CD8-positive, alpha-beta T cell (primary cell): ENCODE measurements at regions of chr11 and their contacts with region 1.

Region 1: DNA sequence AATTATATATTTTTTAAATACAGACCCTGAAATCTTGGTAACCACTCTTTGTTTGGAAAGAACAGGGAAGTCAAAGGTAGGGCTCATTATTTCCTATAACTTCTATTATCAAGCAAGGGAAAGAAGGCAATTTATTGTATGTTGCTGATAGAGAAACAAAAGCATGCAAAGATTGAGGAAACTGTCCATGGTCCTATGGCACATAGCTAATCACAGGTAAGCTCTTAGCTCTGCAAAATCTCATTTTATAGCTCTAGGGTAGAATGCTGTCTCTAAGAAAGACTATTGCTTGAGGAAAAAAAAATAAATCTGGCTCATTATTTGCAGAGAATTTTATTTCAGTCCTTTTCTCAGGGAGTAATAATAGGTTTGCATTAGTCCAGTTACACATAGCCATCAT is 7.4 kb upstream of the GUCY1A2 start:
- DNase-seq: no peak
- ATAC-seq: no peak
- H3K4me3 ChIP-seq: no peak overlapping the region
- H3K4me3 Mint-ChIP-seq: no peak overlapping the region
- H3K27ac ChIP-seq: no peak overlapping the region
- H3K27ac Mint-ChIP-seq: no peak overlapping the region
- H3K4me1 ChIP-seq: no peaks in the 10 kb centered on the region
- H3K4me1 Mint-ChIP-seq: no peaks in the 10 kb centered on the region
- H3K27me3 ChIP-seq: no peaks in the 10 kb centered on the region
- H3K27me3 Mint-ChIP-seq: peaks cover 12% of the 10 kb centered on the region
- CTCF ChIP-seq: no peak

Region 2: GRCh38 chr11:106888386-106888785 is 137.3 kb before region 1 on chr11:
- CTCF ChIA-PET with region 1: no interaction called
- POLR2A ChIA-PET with region 1: no interaction called
- intact Hi-C with region 1: no loop called
- DNase-seq: no peak
- ATAC-seq: no peak
- H3K4me3 ChIP-seq: no peak overlapping the region
- H3K4me3 Mint-ChIP-seq: no peak overlapping the region
- H3K27ac ChIP-seq: no peak overlapping the region
- H3K27ac Mint-ChIP-seq: no peak overlapping the region
- H3K4me1 ChIP-seq: no peaks in the 10 kb centered on the region
- H3K4me1 Mint-ChIP-seq: no peaks in the 10 kb centered on the region
- H3K27me3 ChIP-seq: no peaks in the 10 kb centered on the region
- H3K27me3 Mint-ChIP-seq: no peaks in the 10 kb centered on the region
- CTCF ChIP-seq: no peak

Region 3: GRCh38 chr11:106983941-106984340 is 41.7 kb before region 1 on chr11:
- CTCF ChIA-PET with region 1: no interaction called
- POLR2A ChIA-PET with region 1: interaction called, 3 read pairs
- intact Hi-C with region 1: loop called in 1 of 2 experiments (anchors 2 kb)
- DNase-seq: no peak
- ATAC-seq: no peak
- H3K4me3 ChIP-seq: no peak overlapping the region
- H3K4me3 Mint-ChIP-seq: no peak overlapping the region
- H3K27ac ChIP-seq: no peak overlapping the region
- H3K27ac Mint-ChIP-seq: no peak overlapping the region
- H3K4me1 ChIP-seq: no peaks in the 10 kb centered on the region
- H3K4me1 Mint-ChIP-seq: no peaks in the 10 kb centered on the region
- H3K27me3 ChIP-seq: no peaks in the 10 kb centered on the region
- H3K27me3 Mint-ChIP-seq: no peaks in the 10 kb centered on the region
- CTCF ChIP-seq: no peak

Region 4: DNA sequence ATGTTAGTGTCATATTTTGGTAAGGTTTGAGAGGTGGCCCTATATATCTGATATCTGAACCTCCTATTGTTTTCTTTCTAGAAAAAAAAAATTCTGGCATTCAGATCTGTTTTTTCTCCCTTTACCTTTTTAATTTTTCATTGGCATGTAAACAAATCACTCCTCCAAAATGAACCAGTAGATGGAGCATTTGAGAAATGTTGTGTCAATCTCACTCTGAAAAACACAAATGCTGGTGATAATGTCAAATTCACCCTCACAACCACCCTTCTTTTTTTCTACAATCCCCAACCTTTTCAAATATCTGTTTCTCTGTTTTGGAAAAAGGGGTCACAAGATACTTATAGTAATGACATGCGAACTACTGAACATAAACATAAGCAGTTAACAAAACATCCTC is 16.5 kb before region 1 on chr11:
- CTCF ChIA-PET with region 1: no interaction called
- POLR2A ChIA-PET with region 1: no interaction called
- intact Hi-C with region 1: no loop called
- DNase-seq: no peak
- ATAC-seq: no peak
- H3K4me3 ChIP-seq: no peak overlapping the region
- H3K4me3 Mint-ChIP-seq: no peak overlapping the region
- H3K27ac ChIP-seq: no peak overlapping the region
- H3K27ac Mint-ChIP-seq: no peak overlapping the region
- H3K4me1 ChIP-seq: no peaks in the 10 kb centered on the region
- H3K4me1 Mint-ChIP-seq: no peaks in the 10 kb centered on the region
- H3K27me3 ChIP-seq: no peaks in the 10 kb centered on the region
- H3K27me3 Mint-ChIP-seq: no peaks in the 10 kb centered on the region
- CTCF ChIP-seq: no peak

Region 5: GRCh38 chr11:107043242-107044006 is 17.8 kb after region 1 on chr11:
- CTCF ChIA-PET with region 1: no interaction called
- POLR2A ChIA-PET with region 1: no interaction called
- intact Hi-C with region 1: loop called in 1 of 2 experiments (anchors 1 kb)
- DNase-seq: no peak
- ATAC-seq: no peak
- H3K4me3 ChIP-seq: no peak overlapping the region
- H3K4me3 Mint-ChIP-seq: no peak overlapping the region
- H3K27ac ChIP-seq: no peak overlapping the region
- H3K27ac Mint-ChIP-seq: no peak overlapping the region
- H3K4me1 ChIP-seq: no peaks in the 10 kb centered on the region
- H3K4me1 Mint-ChIP-seq: no peaks in the 10 kb centered on the region
- H3K27me3 ChIP-seq: no peaks in the 10 kb centered on the region
- H3K27me3 Mint-ChIP-seq: no peaks in the 10 kb centered on the region
- CTCF ChIP-seq: no peak